ENCODE measurements at regions of chr10 and their contacts with region 1.

Region 1: GRCh38 chr10:124741281-124741921 is 2.8 kb downstream of the FAM53B start:
- DNase-seq: peak; percentile 73 to 97 (median 87)

Region 2: DNA sequence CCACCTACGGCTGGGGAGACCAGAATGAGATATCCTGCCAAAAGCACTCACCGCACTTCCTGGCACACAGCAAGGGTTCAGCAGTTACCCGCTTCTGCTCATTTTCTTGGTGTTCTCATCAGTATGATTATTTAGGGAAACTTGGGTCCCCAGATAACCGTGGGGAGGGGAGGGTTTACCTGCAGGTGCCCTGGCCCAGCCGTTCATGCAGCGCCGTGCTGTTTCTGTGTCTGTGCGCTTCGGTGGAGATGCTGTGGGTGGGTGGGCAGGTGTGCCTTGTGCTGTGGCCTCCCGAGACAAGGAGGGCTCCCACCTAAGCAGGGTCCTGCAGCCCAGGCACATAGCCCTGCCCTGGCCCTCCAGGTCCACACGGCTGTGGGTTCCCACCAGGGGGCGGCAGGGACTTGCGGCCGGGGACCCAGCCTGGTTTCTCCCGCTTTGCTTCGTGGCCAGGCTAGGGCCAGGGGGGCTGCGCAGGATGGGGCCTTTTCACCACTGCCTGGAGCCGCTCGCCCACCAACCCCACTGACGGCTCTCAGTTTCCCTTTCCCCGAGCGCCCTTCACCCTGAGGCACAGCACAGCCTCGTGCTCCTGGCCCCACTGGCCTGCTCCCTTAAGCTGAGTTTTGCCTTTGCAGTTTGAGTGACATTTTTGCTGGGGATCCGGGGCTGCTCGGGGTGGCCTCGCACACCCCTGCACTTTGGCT is 201.3 kb before region 1 on chr10:
- intact Hi-C with region 1: loop called (anchors 1 kb)
- DNase-seq: peak; percentile 41 to 96 (median 70)

Region 3: GRCh38 chr10:124647421-124648130 is 93.8 kb before region 1 on chr10:
- intact Hi-C with region 1: loop called (anchors 5 kb)
- DNase-seq: peak in 4 of 10 donors; percentile 55 to 90 (median 80)

Region 4: DNA sequence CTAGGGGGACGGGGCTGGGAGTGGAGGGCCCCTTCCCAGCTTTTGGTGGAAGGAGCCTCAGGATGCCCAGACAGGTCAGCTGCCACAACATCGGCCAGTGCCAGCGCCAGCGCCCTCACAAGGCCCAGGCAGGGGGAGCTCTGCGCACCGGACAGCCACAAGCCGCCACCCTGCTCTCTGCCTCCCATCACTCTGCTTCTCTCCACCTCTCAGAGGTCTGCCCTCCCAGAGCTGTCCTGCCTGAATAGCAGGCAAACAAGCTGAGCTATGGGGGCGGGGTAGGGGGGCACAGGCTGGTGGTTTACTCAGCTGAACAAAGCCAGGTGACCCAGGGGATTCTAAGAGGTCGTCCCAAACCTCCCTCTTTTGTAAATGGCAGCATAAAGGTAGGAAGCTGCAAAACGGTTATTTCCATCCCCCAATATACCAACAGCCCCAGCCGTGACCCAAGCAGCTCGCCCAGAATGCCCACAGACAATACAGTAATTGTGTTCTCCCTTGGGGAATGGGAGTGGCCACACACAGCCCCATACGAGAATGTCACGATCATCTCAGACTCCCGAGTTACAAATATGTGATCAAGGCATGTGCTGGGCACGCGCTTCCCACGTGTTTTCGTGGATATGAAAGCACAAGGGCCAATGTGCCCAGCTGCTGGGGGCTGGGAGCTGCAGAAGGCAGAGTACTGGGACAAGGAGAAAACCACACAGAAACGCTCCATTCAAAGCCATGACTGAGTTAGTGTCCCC is 16.9 kb before region 1 on chr10:
- intact Hi-C with region 1: loop called (anchors 2 kb)
- DNase-seq: peak; percentile 67 to 98 (median 91)